Endothelial cell of umbilical vein (primary cell): ENCODE measurements at regions of chr10 and their contacts with region 1.

Region 1: DNA sequence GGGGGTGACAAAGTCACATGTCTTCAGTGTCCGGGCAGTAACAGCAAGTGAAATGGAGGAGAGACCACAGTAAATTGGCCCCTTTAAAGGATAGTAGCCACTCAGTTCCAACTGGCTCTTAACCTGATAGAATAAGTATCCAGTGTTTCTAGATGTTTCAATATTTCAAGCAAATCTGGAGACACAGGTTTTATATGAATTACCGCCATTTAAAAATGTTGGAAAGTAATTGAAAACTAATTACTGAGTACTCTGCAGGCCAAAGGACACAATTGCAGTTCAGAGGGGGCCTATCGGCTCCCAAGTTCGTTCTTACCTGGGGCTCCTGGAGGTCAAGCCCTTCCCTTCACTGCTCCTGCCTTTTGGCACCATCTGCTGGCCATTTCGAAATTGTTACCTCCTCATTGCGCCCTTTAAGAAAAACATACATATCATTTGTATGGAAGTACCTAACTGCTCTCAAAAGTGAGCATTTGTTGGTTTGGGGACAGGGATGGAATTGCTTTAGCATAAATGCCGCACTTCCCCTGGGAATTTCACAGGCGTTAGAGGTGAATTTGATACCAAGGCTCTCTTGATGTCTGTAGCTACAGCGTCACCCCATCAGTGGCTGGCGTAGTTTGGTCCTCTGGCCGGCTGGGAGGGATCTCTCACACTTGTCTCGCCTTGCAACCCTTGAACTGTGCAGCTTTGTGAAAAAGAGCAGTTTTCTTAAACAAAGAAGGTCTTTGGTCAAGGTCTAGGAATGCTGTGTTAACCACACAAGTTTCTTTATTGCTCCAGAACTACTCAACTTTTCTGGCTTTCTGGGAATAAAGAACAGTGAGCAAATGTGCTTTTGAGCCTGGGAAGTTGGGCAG is 220.0 kb downstream of the ARHGAP21 start:
- DNase-seq: peak; percentile 33
- H3K4me3 ChIP-seq: no peak overlapping the region
- H3K27ac ChIP-seq: no peak overlapping the region
- H3K4me1 ChIP-seq: no peaks in the 10 kb centered on the region
- H3K27me3 ChIP-seq: peaks cover 0 to 2% of the 10 kb centered on the region in 2 experiments
- CTCF ChIP-seq: peak; percentile 34 to 42
- POLR2A ChIP-seq: no peak

Region 2: DNA sequence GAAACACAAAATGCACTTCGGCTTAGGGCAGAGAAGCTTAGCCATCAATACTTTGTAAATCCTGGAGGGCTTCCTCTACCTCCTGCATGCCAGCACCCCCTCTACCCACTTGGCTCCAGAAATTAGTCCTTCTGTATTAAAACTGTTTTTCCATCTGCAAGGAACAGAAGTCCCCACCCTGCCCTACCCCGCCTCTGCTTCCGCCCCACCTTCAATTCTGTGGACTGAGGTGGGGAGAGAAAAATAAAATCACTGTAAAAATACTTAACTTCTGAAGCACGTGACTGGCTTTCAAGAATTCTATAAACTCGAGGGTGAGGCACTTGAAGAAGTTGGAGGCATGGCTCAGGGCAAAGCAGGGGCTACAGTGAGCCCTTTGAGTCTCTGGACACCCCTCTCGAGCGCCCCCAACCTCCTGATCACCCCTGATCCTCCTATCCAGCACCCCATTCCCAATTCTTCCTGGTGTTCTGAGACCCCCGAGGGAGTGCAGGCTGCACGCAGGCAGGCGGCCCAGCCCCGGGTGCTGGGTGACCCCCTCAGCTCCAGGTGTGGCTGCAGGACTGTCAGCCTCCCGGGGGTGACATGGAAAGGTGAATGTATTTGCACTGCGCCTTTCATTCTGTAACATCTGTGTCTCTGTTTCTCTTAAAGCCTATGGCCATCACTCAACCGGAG is 302.0 kb before region 1 on chr10:
- CTCF ChIA-PET with region 1: no interaction called
- POLR2A ChIA-PET with region 1: no interaction called
- dilution Hi-C with region 1: no loop called
- intact Hi-C with region 1: loop called (anchors 2 kb)
- DNase-seq: no peak
- H3K4me3 ChIP-seq: no peak overlapping the region
- H3K27ac ChIP-seq: no peak overlapping the region
- H3K4me1 ChIP-seq: no peaks in the 10 kb centered on the region
- H3K27me3 ChIP-seq: no peaks in the 10 kb centered on the region
- CTCF ChIP-seq: no peak
- POLR2A ChIP-seq: no peak

Region 3: GRCh38 chr10:24360282-24361127 is 143.2 kb before region 1 on chr10:
- CTCF ChIA-PET with region 1: no interaction called
- POLR2A ChIA-PET with region 1: no interaction called
- dilution Hi-C with region 1: no loop called
- intact Hi-C with region 1: loop called (anchors 2 kb)
- DNase-seq: peak; percentile 10
- H3K4me3 ChIP-seq: no peak overlapping the region
- H3K27ac ChIP-seq: no peak overlapping the region
- H3K4me1 ChIP-seq: no peaks in the 10 kb centered on the region
- H3K27me3 ChIP-seq: no peaks in the 10 kb centered on the region
- CTCF ChIP-seq: peak; percentile 31 to 39
- POLR2A ChIP-seq: no peak

Region 4: GRCh38 chr10:24419066-24419465 is 84.6 kb before region 1 on chr10:
- CTCF ChIA-PET with region 1: interaction called, 4 read pairs
- POLR2A ChIA-PET with region 1: no interaction called
- dilution Hi-C with region 1: no loop called
- intact Hi-C with region 1: loop called (anchors 2 kb)
- DNase-seq: no peak
- H3K4me3 ChIP-seq: no peak overlapping the region
- H3K27ac ChIP-seq: no peak overlapping the region
- H3K4me1 ChIP-seq: no peaks in the 10 kb centered on the region
- H3K27me3 ChIP-seq: no peaks in the 10 kb centered on the region
- CTCF ChIP-seq: no peak
- POLR2A ChIP-seq: no peak

Region 5: GRCh38 chr10:24444337-24444736 is 59.4 kb before region 1 on chr10:
- CTCF ChIA-PET with region 1: no interaction called
- POLR2A ChIA-PET with region 1: no interaction called
- dilution Hi-C with region 1: no loop called
- intact Hi-C with region 1: no loop called
- DNase-seq: no peak
- H3K4me3 ChIP-seq: no peak overlapping the region
- H3K27ac ChIP-seq: no peak overlapping the region
- H3K4me1 ChIP-seq: peaks cover 11% of the 10 kb centered on the region
- H3K27me3 ChIP-seq: no peaks in the 10 kb centered on the region
- CTCF ChIP-seq: no peak
- POLR2A ChIP-seq: no peak

Region 6: DNA sequence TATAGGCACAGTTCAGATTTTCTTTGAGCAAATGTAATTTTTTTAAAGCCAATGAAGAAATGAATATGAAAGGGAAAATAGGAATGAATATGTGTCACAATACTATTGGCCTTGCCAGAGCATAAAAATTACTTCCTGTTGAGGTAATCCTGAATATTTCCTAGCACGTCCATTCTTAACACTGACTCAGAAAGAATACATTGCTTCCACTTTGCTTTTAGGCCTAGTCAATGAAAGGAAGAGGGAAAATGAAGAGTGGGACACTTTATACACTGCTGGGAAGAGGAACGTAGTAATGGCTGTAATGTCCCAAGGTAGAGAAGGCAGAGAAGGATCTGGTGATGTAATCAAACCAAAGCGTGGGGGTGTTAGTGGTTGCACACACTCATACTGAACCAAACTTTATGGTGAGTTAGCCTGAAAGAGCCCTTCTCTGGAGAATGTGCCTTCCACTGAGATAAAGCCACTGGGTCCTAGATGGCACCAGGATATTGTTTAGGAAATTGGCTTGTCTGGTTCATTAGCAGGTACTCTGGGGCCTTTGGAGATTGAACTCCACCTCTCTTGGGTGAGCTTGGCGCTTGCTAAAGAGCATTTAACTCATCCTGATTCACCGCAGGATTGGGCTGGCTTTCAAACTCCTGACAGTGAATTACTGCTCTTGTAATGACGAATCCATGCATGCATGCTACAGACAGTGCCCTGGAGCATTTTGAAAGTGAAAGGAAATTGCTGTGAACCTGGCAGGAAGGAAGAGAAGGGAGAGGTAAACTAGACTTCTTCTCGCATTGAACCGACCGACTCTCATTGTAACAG is 39.9 kb before region 1 on chr10:
- CTCF ChIA-PET with region 1: no interaction called
- POLR2A ChIA-PET with region 1: no interaction called
- dilution Hi-C with region 1: no loop called
- intact Hi-C with region 1: loop called (anchors 1 kb)
- DNase-seq: peak; percentile 13
- H3K4me3 ChIP-seq: no peak overlapping the region
- H3K27ac ChIP-seq: peak overlapping the region; percentile 45
- H3K4me1 ChIP-seq: peaks cover 6% of the 10 kb centered on the region
- H3K27me3 ChIP-seq: no peaks in the 10 kb centered on the region
- CTCF ChIP-seq: no peak
- POLR2A ChIP-seq: no peak